Adrenal gland (tissue), 19 donors: ENCODE measurements at regions of chr1 and their contacts with region 1.

Region 1: DNA sequence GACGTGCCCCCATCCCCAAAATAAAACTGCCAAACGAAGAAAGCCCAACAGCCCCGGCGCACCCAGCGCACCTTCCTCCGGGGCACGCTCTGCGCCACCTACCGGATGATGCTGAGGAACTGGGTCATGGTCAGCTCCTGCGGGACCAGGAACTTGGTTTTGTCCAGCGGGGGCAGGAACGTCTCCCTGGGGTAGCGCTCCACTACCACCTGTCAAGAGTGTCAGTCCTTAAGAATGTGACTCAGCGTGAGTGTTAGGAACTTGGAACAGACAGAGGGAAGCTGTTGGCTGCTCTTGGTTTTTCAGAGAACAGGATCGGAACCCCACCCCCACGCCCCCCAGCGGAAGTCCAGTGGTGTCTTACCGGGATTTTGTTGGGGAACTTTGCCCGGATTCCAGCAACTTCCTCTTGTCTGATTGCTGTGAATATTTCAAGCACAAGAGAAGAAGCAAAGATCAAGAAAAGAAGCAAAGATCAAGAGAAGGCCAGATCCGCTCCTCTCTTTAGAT is 431 bp downstream of the MAP1LC3C start:
- DNase-seq: peak; percentile 49 to 74 (median 68)
- H3K4me3 ChIP-seq: peak overlapping the region in 1 of 4 donors; percentile 36
- H3K27ac ChIP-seq: no peak overlapping the region
- H3K4me1 ChIP-seq: peaks cover 0 to 7% of the 10 kb centered on the region in 2 donors
- H3K27me3 ChIP-seq: no peaks in the 10 kb centered on the region
- CTCF ChIP-seq: peak in 5 of 6 experiments; percentile 26 to 67 (median 61)
- POLR2A ChIP-seq: no peak

Region 2: GRCh38 chr1:241902391-241903065 is 95.9 kb before region 1 on chr1:
- intact Hi-C with region 1: loop called in 1 of 2 experiments (anchors 10 kb)
- DNase-seq: peak in 1 of 7 donors; percentile 17
- H3K4me3 ChIP-seq: no peak overlapping the region
- H3K27ac ChIP-seq: no peak overlapping the region
- H3K4me1 ChIP-seq: no peaks in the 10 kb centered on the region
- H3K27me3 ChIP-seq: no peaks in the 10 kb centered on the region
- CTCF ChIP-seq: no peak
- POLR2A ChIP-seq: no peak